ENCODE measurements at regions of chr10 and their contacts with region 1.

Region 1: GRCh38 chr10:103367782-103368518 is at the start of gene TAF5:
- DNase-seq: peak; percentile 79 to 94 (median 90)
- H3K4me3 ChIP-seq: peak within 1 kb of the TSS; percentile 67 to 100 (median 96)
- H3K27ac ChIP-seq: peak within 1 kb of the TSS; percentile 32 to 97 (median 90)
- H3K27me3 ChIP-seq: no peaks in the 10 kb centered on the region
- CTCF ChIP-seq: peak in 49 of 56 donors; percentile 13 to 67 (median 37)
- total RNA-seq, gene TAF5: 3.0 to 7.1 (median 4.9) TPM

Region 2: DNA sequence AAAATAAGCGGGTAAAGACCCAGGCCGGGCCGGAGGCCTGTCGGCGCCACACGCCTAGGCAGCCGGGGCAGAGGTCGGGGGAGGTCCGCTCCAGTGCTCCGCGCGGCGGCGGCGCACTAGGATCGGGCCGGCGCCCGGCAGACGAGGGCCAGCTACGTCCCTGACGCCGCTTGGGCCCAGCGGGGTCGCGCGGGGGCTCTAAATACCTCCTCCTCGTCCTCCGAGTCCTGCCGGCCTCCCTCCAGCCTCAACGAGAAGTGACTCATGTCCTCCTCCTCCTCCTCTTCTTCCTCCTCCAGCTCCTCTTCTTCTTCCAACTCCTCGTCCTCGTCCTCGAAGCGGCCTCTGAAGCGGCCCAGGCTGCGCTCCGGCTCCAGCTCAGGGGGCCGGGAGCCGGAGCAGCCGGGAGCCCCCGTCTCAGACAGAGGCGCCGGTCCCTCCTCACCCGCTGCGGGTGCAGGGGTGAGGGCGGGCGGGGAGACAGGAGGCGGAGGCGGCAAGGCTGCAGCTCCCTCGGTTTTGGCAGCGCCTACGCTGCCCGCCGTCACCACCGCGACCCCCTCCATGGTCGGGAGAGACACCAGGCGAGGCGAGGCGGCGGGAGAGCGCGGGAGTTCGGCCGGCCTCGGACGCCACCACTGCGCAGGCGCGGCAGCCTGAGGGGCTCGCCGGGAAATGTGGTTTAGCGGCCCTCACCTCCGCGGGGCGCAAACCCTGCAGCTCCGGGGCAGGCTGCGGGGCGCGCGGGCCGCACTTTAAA is 17.3 kb before region 1 on chr10 and contains the start of gene PCGF6:
- intact Hi-C with region 1: loop called (anchors 2 kb)
- DNase-seq: peak; percentile 63 to 90 (median 74)
- H3K4me3 ChIP-seq: peak within 1 kb of the TSS; percentile 62 to 94 (median 86)
- H3K27ac ChIP-seq: peak within 1 kb of the TSS in 58 of 59 donors; percentile 14 to 93 (median 82)
- H3K27me3 ChIP-seq: no peaks in the 10 kb centered on the region
- CTCF ChIP-seq: peak in 36 of 56 donors; percentile 6 to 51 (median 30)
- total RNA-seq, gene PCGF6: 4.2 to 13.9 (median 7.3) TPM

Region 3: GRCh38 chr10:103396064-103396788 is 28.3 kb after region 1 on chr10 and contains the starts of genes ATP5MK and PDCD11:
- intact Hi-C with region 1: loop called in 1 of 2 experiments (anchors 1 kb)
- DNase-seq: peak; percentile 94 to 99 (median 98)
- H3K4me3 ChIP-seq: peak within 1 kb of the TSS; percentile 72 to 100 (median 96)
- H3K27ac ChIP-seq: peak within 1 kb of the TSS in 57 of 59 donors; percentile 22 to 92 (median 81)
- H3K27me3 ChIP-seq: no peaks in the 10 kb centered on the region
- CTCF ChIP-seq: peak in 30 of 56 donors; percentile 9 to 53 (median 26)
- total RNA-seq, gene ATP5MK: 194 to 564 (median 384) TPM
- total RNA-seq, gene PDCD11: 13.8 to 28.8 (median 19.8) TPM